Activated CD8-positive, alpha-beta T cell treated with anti-CD3 and anti-CD28 coated beads for 36 hours (primary cell): ENCODE measurements at regions of chr10 and their contacts with region 1.

Region 1: DNA sequence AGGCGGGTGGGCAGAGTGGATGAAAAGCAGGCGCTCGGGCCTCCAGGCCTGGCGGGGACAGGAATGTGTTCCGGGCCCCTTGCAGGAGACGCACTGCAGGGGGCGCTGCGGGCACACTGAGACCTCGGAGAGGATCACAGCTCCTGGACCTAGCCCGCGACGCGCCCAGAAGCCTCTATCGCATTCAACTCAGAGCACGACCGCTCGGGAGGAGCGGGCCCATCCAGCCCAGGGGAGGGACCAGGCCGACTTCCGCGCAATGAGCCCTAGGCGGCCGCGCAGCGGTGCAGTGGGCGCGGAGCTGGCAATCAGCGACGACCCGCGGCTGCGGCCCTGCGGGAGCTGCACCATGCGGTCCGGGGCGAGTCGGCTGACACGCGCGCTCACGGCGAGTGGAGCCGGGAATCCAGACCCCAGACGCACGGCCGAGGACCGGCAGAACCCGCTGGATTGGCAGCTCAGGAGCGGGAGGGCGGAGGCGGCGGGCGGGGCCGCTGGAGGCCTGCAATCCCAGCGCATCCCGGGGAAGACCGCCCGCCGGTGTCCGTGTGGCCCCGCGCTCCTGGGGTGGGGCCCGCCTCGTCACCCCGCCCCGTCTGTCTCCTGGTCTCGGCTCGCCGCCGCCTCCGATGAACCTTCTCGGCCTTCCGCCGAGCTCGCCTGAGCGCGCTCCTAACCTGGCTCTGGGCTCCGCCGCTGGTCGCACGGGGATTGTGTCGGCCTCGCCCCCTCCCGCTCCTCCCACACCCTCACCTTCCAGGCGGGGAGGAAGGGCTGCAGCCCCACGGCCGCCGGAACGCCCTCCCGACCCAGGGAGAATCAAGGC is 33.5 kb upstream of the GRID1 start:
- DNase-seq: peak; percentile 98
- ATAC-seq: peak; percentile 90
- H3K4me3 Mint-ChIP-seq: peak overlapping the region; percentile 88
- H3K27ac Mint-ChIP-seq: peak overlapping the region; percentile 90
- H3K4me1 Mint-ChIP-seq: peaks cover 21% of the 10 kb centered on the region
- H3K27me3 Mint-ChIP-seq: no peaks in the 10 kb centered on the region
- CTCF ChIP-seq: peak; percentile 88

Region 2: GRCh38 chr10:86389441-86390193 is 10.5 kb before region 1 on chr10:
- CTCF ChIA-PET with region 1: interaction called, 9 read pairs
- POLR2A ChIA-PET with region 1: interaction called, 12 read pairs
- intact Hi-C with region 1: no loop called
- DNase-seq: peak; percentile 43
- ATAC-seq: peak; percentile 84
- H3K4me3 Mint-ChIP-seq: peak overlapping the region; percentile 71
- H3K27ac Mint-ChIP-seq: peak overlapping the region; percentile 50
- H3K4me1 Mint-ChIP-seq: peaks cover 2% of the 10 kb centered on the region
- H3K27me3 Mint-ChIP-seq: peaks cover 19% of the 10 kb centered on the region
- CTCF ChIP-seq: no peak

Region 3: GRCh38 chr10:86419101-86419500 is 19.0 kb after region 1 on chr10:
- CTCF ChIA-PET with region 1: interaction called, 13 read pairs
- POLR2A ChIA-PET with region 1: interaction called, 5 read pairs
- intact Hi-C with region 1: no loop called
- DNase-seq: peak; percentile 40
- ATAC-seq: peak; percentile 86
- H3K4me3 Mint-ChIP-seq: no peak overlapping the region
- H3K27ac Mint-ChIP-seq: peak overlapping the region; percentile 13
- H3K4me1 Mint-ChIP-seq: peaks cover 25% of the 10 kb centered on the region
- H3K27me3 Mint-ChIP-seq: no peaks in the 10 kb centered on the region
- CTCF ChIP-seq: no peak

Region 4: GRCh38 chr10:86446987-86447386 is 46.9 kb after region 1 on chr10:
- CTCF ChIA-PET with region 1: interaction called, 18 read pairs
- POLR2A ChIA-PET with region 1: interaction called, 5 read pairs
- intact Hi-C with region 1: loop called (anchors 10 kb)
- DNase-seq: no peak
- ATAC-seq: peak; percentile 34
- H3K4me3 Mint-ChIP-seq: no peak overlapping the region
- H3K27ac Mint-ChIP-seq: peak overlapping the region; percentile 51
- H3K4me1 Mint-ChIP-seq: peaks cover 30% of the 10 kb centered on the region
- H3K27me3 Mint-ChIP-seq: no peaks in the 10 kb centered on the region
- CTCF ChIP-seq: no peak

Region 5: GRCh38 chr10:86585037-86585725 is 185.1 kb after region 1 on chr10:
- CTCF ChIA-PET with region 1: interaction called, 56 read pairs
- POLR2A ChIA-PET with region 1: interaction called, 8 read pairs
- intact Hi-C with region 1: loop called (anchors 1 kb)
- DNase-seq: peak; percentile 78
- ATAC-seq: peak; percentile 98
- H3K4me3 Mint-ChIP-seq: no peak overlapping the region
- H3K27ac Mint-ChIP-seq: no peak overlapping the region
- H3K4me1 Mint-ChIP-seq: peaks cover 4% of the 10 kb centered on the region
- H3K27me3 Mint-ChIP-seq: no peaks in the 10 kb centered on the region
- CTCF ChIP-seq: peak; percentile 97